ENCODE measurements at regions of chr1 and their contacts with region 1.

Region 1: GRCh38 chr1:224106568-224107281 is 7.2 kb upstream of the FBXO28 start:
- DNase-seq: peak; percentile 85
- ATAC-seq: peak; percentile 99
- H3K4me3 ChIP-seq: no peak overlapping the region
- H3K27ac ChIP-seq: 0 out of 2 replicates have a peak overlapping the region, but pooled peaks have one; percentile 0
- H3K4me1 ChIP-seq: peaks cover 5% of the 10 kb centered on the region
- H3K27me3 ChIP-seq: no peaks in the 10 kb centered on the region
- CTCF ChIP-seq: peak; percentile 90

Region 2: DNA sequence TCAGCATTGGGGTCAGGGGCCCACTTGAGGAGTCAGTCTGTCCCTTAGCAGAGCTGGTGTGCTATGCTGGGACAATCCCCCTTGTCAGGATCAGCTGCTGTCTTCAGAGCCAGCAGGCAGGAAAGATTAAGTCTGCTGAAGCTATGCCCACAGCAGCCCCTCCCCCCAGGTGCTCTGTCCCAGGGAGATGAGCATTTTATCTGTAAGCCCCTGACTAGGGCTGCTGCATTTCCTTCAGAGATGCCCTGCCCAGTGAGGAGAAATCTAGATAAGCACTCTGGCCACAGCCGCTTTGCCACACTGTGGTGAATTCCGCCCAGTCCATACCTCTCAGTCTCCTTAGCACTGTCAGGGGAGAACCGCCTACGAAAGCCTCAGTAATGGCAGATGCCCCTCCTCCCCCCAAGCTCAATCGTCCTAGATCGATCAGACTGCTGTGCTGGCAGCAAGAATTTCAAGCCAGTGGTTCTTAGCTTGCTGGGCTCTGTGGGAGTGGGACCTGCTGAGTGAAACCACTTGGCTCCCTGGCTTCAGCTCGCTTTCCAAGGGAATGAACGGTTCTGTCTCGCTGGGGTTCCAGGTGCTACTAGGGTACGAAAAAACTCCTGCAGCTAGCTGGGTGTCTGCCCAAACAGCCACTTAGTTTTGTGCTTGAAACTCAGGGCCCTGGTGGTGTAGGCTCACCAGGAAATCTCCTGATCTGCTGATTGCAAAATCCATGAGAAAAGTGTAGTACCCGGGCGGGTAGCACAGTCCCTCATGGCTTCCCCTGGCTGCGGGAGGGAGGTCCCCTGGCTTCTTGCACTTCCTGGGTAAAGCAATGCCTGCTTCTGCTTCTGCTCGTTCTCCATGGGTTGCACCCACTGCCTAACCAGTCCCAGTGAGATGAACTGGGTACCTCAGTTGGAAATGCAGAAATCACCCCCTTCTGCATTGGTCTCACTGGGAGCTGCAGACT is 235.8 kb before region 1 on chr1:
- CTCF ChIA-PET with region 1: no interaction called
- POLR2A ChIA-PET with region 1: no interaction called
- intact Hi-C with region 1: no loop called
- DNase-seq: no peak
- ATAC-seq: no peak
- H3K4me3 ChIP-seq: no peak overlapping the region
- H3K27ac ChIP-seq: no peak overlapping the region
- H3K4me1 ChIP-seq: peaks cover 15% of the 10 kb centered on the region
- H3K27me3 ChIP-seq: no peaks in the 10 kb centered on the region
- CTCF ChIP-seq: no peak

Region 3: GRCh38 chr1:224052772-224053171 is 54.0 kb before region 1 on chr1:
- CTCF ChIA-PET with region 1: interaction called, 11 read pairs
- POLR2A ChIA-PET with region 1: no interaction called
- intact Hi-C with region 1: loop called (anchors 5 kb)
- DNase-seq: peak; percentile 93
- ATAC-seq: peak; percentile 82
- H3K4me3 ChIP-seq: peak overlapping the region; percentile 34; the same call in 1 of the 2 replicates
- H3K27ac ChIP-seq: peak overlapping the region; percentile 79
- H3K4me1 ChIP-seq: peaks cover 35% of the 10 kb centered on the region
- H3K27me3 ChIP-seq: no peaks in the 10 kb centered on the region
- CTCF ChIP-seq: no peak

Region 4: DNA sequence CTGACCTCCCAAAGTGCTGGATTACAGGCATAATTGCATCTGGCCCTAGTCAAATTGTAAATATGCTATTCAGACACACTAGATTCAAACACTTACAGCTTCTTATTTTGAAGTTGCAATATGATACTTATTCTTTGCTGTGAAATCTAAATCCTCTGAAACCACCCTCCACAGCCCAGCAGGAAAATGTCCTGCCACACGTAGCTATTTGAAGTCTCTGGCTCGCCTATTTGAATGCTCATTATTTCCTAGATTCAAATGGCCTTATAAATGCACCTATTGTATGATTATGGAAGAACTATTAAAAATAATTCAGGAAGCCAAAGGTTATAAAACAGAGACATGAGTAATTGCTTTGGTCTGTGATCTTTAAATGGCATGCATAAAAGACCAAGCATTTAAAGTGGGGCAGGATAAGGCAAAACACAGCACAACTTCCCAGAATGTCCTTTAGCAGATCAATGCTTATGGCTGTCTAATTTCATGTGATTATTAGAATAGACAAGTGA is 19.4 kb before region 1 on chr1:
- CTCF ChIA-PET with region 1: interaction called, 5 read pairs
- POLR2A ChIA-PET with region 1: no interaction called
- intact Hi-C with region 1: loop called (anchors 2 kb)
- DNase-seq: peak; percentile 61
- ATAC-seq: peak; percentile 90
- H3K4me3 ChIP-seq: no peak overlapping the region
- H3K27ac ChIP-seq: peak overlapping the region; percentile 47
- H3K4me1 ChIP-seq: peaks cover 17% of the 10 kb centered on the region
- H3K27me3 ChIP-seq: no peaks in the 10 kb centered on the region
- CTCF ChIP-seq: no peak

Measured in PC-3 (cell line).